B cell (primary cell): ENCODE measurements at regions of chr12 and their contacts with region 1.

Region 1: DNA sequence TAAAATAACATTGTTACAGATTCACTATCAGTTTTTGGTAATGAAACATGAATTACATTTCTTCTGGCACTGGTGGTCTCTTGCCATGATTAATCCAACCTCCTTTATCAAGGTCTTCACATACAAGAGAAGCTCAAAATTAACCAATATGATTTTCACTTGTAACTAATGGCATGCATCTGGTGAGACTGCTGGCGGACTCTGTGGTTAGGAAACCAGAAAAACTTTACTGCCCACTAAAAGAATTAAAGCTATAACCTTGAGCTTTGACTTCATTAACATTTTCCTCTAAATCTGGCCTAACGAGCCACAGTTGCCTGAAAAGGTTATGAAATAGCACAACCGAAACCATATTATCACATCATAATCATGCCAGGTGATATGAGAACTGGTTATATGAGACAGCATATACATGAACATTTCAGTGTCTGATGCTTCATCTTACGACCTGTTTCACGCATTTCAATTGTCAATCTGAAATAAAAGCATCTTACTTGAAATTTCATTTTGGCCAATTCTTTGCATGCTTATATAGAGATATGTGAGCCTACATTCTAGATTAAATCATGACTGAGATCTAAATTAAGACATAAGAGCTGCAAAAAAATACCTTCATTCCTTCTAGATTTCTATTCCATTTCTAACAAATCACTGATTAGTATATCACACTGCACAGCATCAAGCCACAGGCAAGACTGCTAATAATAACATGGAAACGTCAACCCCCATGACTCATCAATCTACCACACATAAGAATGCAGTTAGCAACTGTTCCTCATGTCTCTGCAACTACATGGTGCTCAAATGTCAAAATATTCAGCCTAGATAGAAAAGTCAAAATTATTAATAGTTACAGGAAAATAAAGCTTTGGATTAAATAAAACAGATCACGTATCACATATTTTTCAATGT is 89.3 kb downstream of the OSBPL8 start:
- DNase-seq: no peak
- ATAC-seq: peak; percentile 61
- H3K4me3 ChIP-seq: no peak overlapping the region
- H3K4me3 Mint-ChIP-seq: no peak overlapping the region
- H3K27ac ChIP-seq: no peak overlapping the region
- H3K27ac Mint-ChIP-seq: no peak overlapping the region
- H3K4me1 ChIP-seq: peaks cover 4 to 13% of the 10 kb centered on the region in 2 donors
- H3K4me1 Mint-ChIP-seq: peaks cover 11% of the 10 kb centered on the region
- H3K27me3 ChIP-seq: no peaks in the 10 kb centered on the region
- H3K27me3 Mint-ChIP-seq: no peaks in the 10 kb centered on the region
- CTCF ChIP-seq: no peak

Region 2: DNA sequence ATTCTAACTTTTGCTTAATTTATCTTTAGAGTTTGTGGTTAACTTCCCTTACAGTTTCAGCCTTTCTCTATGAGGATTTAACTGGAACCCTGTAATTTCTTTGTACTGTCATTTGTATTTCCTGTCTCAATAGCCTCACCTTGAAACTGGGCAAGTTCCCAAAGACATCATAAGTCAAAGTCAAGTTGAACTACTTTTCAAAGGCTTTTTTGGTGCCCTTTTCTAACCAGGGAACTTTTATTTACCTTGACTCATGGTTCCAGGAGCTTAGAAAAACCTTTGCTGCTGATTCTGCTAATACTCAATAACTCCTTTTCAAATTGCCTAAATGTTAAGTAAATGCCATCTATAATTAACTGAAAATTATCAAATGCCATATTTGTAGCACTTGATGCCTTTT is 758.0 kb before region 1 on chr12:
- CTCF ChIA-PET with region 1: no interaction called
- POLR2A ChIA-PET with region 1: no interaction called
- intact Hi-C with region 1: no loop called
- DNase-seq: no peak
- ATAC-seq: no peak
- H3K4me3 ChIP-seq: no peak overlapping the region
- H3K4me3 Mint-ChIP-seq: no peak overlapping the region
- H3K27ac ChIP-seq: no peak overlapping the region
- H3K27ac Mint-ChIP-seq: no peak overlapping the region
- H3K4me1 ChIP-seq: no peaks in the 10 kb centered on the region
- H3K4me1 Mint-ChIP-seq: no peaks in the 10 kb centered on the region
- H3K27me3 ChIP-seq: no peaks in the 10 kb centered on the region
- H3K27me3 Mint-ChIP-seq: peaks cover 2% of the 10 kb centered on the region
- CTCF ChIP-seq: no peak

Region 3: DNA sequence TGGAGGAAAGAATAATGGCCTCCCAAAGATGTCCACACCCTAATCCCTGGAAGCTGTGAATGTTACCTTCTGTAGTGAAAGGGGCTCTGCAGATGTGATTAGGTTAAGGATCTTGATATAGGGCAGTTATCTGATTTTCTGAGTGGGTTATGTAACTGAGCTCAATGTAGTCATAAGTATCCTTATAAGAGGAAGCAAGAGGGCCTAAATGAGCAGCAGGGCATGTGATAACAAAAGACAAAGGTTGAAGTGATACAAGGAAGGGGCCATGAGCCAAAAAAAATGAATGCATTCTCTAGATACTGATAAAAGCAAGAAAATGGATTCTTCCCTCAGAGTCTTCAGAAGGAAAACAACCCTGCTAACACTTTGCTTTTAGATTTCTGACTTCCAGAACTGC is 10.5 kb after region 1 on chr12:
- CTCF ChIA-PET with region 1: no interaction called
- POLR2A ChIA-PET with region 1: no interaction called
- intact Hi-C with region 1: no loop called
- DNase-seq: no peak
- ATAC-seq: no peak
- H3K4me3 ChIP-seq: no peak overlapping the region
- H3K4me3 Mint-ChIP-seq: no peak overlapping the region
- H3K27ac ChIP-seq: no peak overlapping the region
- H3K27ac Mint-ChIP-seq: no peak overlapping the region
- H3K4me1 ChIP-seq: no peaks in the 10 kb centered on the region
- H3K4me1 Mint-ChIP-seq: peaks cover 6% of the 10 kb centered on the region
- H3K27me3 ChIP-seq: no peaks in the 10 kb centered on the region
- H3K27me3 Mint-ChIP-seq: no peaks in the 10 kb centered on the region
- CTCF ChIP-seq: no peak

Region 4: GRCh38 chr12:76508178-76508577 is 37.9 kb after region 1 on chr12:
- CTCF ChIA-PET with region 1: no interaction called
- POLR2A ChIA-PET with region 1: no interaction called
- intact Hi-C with region 1: loop called (anchors 5 kb)
- DNase-seq: no peak
- ATAC-seq: no peak
- H3K4me3 ChIP-seq: no peak overlapping the region
- H3K4me3 Mint-ChIP-seq: no peak overlapping the region
- H3K27ac ChIP-seq: no peak overlapping the region
- H3K27ac Mint-ChIP-seq: peak overlapping the region; percentile 26
- H3K4me1 ChIP-seq: peaks cover 16 to 29% of the 10 kb centered on the region in 2 donors
- H3K4me1 Mint-ChIP-seq: peaks cover 51% of the 10 kb centered on the region
- H3K27me3 ChIP-seq: no peaks in the 10 kb centered on the region
- H3K27me3 Mint-ChIP-seq: no peaks in the 10 kb centered on the region
- CTCF ChIP-seq: no peak